AG04450 (cell line): ENCODE measurements at regions of chr9 and their contacts with region 1.

Region 1: DNA sequence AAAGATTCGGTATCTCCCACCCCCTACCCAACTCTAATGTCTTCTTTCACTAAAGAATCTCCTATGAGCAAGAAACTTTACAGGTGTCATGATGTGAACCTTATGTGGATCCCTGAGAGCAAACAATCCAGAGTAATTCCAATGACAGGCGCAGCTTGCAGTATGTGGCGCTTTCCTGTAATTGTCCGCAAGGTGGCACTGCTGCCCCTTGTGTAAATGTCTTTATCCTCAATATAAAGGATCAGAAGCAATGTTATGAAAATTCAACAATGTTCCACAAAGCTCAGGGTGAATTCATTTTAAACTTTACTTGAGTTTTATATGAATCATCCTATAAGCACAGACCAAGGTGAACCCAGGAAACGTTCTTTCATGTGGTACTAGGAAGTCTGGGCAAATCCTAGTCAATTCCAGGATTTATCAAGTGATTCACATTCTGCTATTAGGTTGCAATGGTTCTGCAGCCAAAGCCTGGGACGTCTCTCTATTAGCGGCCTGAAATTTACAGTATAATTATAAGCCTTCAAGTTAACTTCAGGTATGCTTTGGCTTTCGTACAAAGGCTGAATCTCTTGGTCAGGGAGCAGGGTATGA is 113.7 kb downstream of the TRPM6 start:
- DNase-seq: peak; percentile 55
- H3K4me3 ChIP-seq: no peak overlapping the region
- H3K27ac ChIP-seq: no peak overlapping the region
- H3K27me3 ChIP-seq: no peaks in the 10 kb centered on the region
- CTCF ChIP-seq: peak; percentile 95

Region 2: DNA sequence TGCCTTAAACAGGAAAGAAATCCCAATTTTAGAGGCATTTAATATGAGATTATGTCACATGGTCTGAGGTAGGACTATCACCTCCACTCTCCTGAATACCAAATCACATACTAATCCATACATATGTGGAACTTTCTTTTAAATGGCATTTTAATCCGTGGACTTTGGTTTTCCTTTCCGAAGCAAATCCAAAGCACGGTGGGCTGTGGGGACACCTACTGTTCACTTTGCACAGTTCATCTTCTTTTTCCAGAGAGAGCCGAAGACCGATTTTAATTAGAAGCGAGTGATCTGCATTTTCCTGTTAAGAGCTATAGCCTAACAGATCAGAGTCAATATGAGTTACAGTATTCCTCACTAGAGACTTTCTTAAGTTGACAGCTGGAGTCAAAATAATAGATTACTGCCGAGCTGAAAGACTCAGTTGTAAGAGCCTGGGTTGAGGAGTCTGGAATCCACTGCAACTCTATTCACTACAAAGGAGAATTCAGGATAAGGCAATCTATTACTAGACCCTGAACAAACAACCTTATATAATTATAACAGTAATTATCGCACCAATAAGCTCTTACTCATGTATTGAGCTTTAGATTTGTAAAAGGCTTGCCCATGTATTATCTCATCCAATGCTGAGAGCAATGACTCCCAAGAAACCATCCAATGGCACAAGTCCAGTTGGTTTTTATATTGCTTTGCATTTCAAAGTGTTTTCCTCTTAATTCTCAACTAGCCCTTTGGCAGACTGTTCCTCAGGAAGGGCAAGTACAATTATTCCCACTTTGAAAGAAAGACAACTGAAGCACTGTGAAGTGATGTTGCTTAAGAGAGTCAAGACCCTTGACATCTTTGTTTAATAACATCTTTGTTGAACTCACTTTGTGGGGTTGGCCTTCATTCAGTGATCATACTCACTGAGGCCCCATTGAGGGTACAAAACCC is 30.9 kb before region 1 on chr9:
- CTCF ChIA-PET with region 1: interaction called, 10 read pairs
- POLR2A ChIA-PET with region 1: no interaction called
- DNase-seq: peak; percentile 15
- H3K4me3 ChIP-seq: no peak overlapping the region
- H3K27ac ChIP-seq: no peak overlapping the region
- H3K27me3 ChIP-seq: peaks cover 7% of the 10 kb centered on the region
- CTCF ChIP-seq: peak; percentile 83

Region 3: DNA sequence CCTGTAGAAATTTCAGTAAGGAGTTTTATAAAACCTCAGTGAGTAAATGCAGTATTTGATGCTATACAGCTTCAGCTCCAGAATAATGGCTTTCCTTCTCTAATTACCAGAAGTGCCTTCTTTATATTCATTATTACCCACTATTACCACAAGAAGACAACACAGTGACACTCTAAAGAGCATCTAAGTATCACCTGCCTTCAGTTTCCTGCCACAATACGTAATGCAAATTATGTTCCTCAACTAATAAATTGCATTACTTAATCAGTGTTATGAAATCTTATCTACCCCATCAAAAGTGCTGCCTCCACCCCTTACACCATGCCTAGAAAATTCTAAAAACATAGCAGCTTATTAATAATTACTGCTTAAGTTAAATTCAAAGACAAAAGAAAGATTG is 21.8 kb after region 1 on chr9:
- CTCF ChIA-PET with region 1: interaction called, 16 read pairs
- POLR2A ChIA-PET with region 1: no interaction called
- DNase-seq: no peak
- H3K4me3 ChIP-seq: no peak overlapping the region
- H3K27ac ChIP-seq: no peak overlapping the region
- H3K27me3 ChIP-seq: no peaks in the 10 kb centered on the region
- CTCF ChIP-seq: no peak

Region 4: DNA sequence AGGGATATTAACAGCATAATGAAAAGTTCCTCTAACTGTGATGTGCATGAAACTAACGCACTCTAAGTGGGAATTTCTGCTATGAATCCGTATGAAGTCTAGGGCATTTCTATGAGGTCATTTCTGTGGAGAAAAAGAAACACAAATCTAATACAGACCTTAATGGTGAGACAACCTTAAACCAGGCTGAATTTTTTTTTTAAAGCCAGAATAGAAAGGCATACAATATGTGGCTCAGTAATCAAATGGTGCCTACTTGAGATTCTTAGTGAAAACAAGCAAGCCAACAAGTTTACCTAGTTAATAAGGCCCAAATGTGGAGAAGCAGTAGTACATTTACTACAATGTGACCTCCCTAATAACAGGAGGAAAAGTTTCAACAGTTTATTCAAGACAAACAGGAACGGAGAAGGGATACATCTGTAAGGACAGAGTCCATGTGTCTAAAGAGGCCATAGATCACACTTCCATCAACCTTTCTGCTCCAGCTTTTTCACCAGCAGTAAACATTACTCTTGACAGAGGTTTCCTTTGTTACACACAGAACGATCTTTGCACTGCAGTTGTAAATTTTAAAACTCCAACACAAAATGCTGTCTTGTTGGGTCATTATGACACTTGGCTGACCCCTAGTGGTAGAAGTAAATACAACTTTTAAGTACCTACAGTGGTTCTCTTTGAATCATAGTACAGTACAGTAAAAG is 227.9 kb after region 1 on chr9:
- CTCF ChIA-PET with region 1: interaction called, 270 read pairs
- POLR2A ChIA-PET with region 1: no interaction called
- DNase-seq: peak; percentile 78
- H3K4me3 ChIP-seq: no peak overlapping the region
- H3K27ac ChIP-seq: no peak overlapping the region
- H3K27me3 ChIP-seq: no peaks in the 10 kb centered on the region
- CTCF ChIP-seq: peak; percentile 72

Region 5: GRCh38 chr9:75027187-75028107 is 253.5 kb after region 1 on chr9:
- CTCF ChIA-PET with region 1: interaction called, 12 read pairs
- POLR2A ChIA-PET with region 1: no interaction called
- DNase-seq: no peak
- H3K4me3 ChIP-seq: peak overlapping the region; percentile 86
- H3K27ac ChIP-seq: peak overlapping the region; percentile 47
- H3K27me3 ChIP-seq: no peaks in the 10 kb centered on the region
- CTCF ChIP-seq: no peak

Region 6: DNA sequence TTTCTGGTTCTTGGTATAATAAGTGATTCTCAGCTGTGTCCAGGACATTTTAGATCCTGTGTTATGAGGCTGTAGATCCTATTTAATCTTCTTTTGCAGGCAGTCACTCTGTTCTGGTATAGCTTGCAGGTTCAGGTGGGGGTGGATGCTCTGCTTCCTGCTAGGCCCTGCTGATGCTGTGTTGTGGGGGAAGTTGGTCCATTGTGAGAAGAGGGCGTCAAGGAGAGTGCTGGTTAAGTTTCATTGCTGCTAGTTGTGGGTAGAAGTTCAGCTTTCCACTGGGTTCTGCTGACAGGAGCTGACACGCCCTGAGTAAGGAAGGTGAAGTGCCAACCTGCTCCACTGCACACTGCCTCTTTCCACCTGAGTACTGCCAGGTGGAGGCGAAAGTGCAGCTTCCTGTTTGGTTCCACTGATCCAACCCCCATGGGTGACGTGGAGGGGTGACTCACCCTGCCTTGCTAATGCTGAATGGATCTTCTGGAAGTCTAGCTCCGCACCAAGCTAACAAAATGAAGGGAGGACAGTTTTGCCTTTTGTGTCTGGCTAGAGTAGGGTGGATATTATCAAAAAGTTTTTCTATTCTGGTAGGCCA is 297.6 kb after region 1 on chr9:
- CTCF ChIA-PET with region 1: interaction called, 131 read pairs
- POLR2A ChIA-PET with region 1: no interaction called
- DNase-seq: no peak
- H3K4me3 ChIP-seq: no peak overlapping the region
- H3K27ac ChIP-seq: no peak overlapping the region
- H3K27me3 ChIP-seq: no peaks in the 10 kb centered on the region
- CTCF ChIP-seq: no peak

Region 7: DNA sequence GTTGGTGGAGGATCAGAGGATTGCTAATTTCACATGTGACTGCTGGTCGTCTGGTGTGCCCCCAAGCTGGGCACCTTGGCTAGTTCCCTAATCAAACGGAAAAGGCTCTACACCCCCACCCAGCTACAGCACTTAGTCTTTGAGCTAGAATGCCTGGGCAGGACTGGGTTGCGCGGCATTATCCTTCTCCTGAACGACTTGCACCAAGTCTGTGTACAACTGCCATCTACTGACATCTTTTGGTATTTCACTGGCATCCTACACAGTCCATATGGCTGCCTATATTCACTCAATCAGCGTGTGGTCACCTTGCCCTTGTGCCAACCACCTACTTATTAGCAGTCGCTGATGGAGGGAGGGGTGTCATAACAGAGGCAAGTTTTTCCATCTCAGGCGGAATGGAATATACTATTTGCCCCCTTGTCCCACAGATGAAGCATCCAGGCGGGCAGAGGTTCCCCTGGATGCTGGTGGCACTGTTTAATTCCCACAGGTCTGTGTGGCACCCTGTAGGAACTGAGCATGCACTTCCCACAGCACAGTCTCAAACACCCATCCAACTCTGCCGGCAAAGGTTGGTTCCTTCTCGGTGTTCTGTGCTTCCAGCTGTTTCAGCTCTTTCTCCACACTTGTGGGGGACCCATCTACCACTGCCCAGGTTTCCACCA is 464.5 kb after region 1 on chr9:
- CTCF ChIA-PET with region 1: interaction called, 15 read pairs
- POLR2A ChIA-PET with region 1: no interaction called
- DNase-seq: peak; percentile 15
- H3K4me3 ChIP-seq: no peak overlapping the region
- H3K27ac ChIP-seq: no peak overlapping the region
- H3K27me3 ChIP-seq: no peaks in the 10 kb centered on the region
- CTCF ChIP-seq: peak; percentile 69